PC-3 (cell line): ENCODE measurements at regions of chr1 and their contacts with region 1.

Region 1: DNA sequence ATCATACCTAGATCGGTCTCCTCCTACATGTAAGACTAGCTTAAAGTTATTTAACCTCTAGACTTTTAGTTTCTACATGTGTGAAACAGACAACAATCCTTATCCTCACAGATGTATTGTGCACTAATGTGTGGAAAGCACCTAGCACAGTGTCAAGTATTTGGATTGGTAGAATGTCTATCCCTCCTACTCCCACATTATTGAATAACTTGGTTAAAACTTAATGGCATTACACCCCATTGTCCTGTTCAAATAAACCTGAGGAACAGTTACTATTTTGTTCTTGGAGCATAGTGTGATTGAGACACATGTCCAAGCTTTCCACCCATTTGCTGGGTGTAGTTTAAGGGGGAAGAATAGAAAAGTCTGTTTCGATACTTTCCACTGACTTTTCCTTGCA is 208.8 kb upstream of the JUN start:
- DNase-seq: no peak
- ATAC-seq: no peak
- H3K4me3 ChIP-seq: no peak overlapping the region
- H3K27ac ChIP-seq: no peak overlapping the region
- H3K4me1 ChIP-seq: no peaks in the 10 kb centered on the region
- H3K27me3 ChIP-seq: no peaks in the 10 kb centered on the region
- CTCF ChIP-seq: no peak

Region 2: DNA sequence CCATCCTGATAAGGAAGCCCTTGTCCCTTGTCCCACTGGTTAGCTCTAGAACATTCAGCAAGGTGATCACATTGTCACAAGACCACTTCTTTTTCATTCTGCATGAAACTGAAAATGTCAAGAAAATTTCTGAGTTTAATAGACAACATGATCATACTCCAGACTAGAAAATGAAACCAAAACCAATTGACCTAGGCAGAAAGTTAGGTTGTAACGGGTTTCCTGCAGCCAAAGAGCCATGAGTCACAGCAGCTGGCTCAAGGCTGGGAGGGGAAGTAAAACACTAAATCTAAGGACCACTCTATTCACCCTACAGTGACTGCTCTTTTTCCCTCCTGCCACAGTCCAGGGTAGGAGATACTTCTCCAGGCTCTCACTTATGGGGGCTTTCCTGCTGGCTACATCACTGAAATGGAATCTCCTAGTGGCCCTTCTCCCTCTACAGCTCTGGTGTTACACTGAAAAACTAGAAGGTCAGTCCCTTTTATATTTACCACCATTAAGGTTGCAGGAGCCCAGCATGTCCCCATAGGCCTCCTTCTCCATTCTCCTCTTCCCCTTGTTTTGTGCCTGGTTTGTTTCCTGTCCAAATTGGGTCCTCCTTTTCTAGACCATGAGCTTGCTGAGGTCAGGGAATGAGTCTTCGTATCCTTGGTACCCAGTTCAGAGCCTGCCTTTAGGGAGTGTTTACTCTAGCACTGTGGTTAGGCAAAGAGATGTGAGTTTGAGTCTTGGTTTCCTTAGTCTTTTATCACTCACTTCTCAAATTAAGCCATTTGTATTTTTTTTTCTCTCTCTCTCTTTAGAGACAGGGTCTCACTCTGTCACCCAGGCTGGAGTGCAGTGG is 27.7 kb after region 1 on chr1:
- CTCF ChIA-PET with region 1: no interaction called
- POLR2A ChIA-PET with region 1: interaction called, 12 read pairs
- intact Hi-C with region 1: no loop called
- DNase-seq: peak; percentile 58
- ATAC-seq: peak; percentile 77
- H3K4me3 ChIP-seq: no peak overlapping the region
- H3K27ac ChIP-seq: no peak overlapping the region
- H3K4me1 ChIP-seq: peaks cover 26% of the 10 kb centered on the region
- H3K27me3 ChIP-seq: no peaks in the 10 kb centered on the region
- CTCF ChIP-seq: no peak